GM10248 (cell line): ENCODE measurements at regions of chr13 and their contacts with region 1.

Region 1: DNA sequence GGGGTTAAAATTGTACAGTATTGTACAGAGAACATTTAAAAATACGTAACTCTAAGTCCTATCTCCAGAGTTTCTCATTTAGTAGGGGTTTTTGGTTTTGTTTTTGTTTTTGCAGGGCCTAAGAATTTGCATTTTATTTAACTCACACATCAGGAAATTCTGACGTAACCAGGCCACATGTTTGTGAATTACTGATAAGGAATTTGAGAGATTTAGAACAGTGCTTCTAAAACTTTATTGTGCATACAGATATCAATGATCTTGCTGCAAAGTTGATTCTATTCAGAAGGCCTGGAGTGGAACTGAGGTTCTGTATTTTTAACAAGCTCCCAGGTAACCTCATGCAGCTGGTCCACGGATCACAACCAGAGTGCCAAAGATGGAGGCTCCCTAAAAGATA is 49.3 kb downstream of the LIG4 start:
- DNase-seq: no peak
- CTCF ChIP-seq: no peak

Region 2: GRCh38 chr13:108044954-108045353 is 121.1 kb before region 1 on chr13:
- CTCF ChIA-PET with region 1: no interaction called
- POLR2A ChIA-PET with region 1: no interaction called
- DNase-seq: no peak
- CTCF ChIP-seq: no peak

Region 3: GRCh38 chr13:108176685-108177274 is 10.7 kb after region 1 on chr13:
- CTCF ChIA-PET with region 1: interaction called, 10 read pairs
- POLR2A ChIA-PET with region 1: no interaction called
- DNase-seq: peak; percentile 41
- CTCF ChIP-seq: peak; percentile 47